ENCODE measurements at regions of chr9 and their contacts with region 1.

Region 1: DNA sequence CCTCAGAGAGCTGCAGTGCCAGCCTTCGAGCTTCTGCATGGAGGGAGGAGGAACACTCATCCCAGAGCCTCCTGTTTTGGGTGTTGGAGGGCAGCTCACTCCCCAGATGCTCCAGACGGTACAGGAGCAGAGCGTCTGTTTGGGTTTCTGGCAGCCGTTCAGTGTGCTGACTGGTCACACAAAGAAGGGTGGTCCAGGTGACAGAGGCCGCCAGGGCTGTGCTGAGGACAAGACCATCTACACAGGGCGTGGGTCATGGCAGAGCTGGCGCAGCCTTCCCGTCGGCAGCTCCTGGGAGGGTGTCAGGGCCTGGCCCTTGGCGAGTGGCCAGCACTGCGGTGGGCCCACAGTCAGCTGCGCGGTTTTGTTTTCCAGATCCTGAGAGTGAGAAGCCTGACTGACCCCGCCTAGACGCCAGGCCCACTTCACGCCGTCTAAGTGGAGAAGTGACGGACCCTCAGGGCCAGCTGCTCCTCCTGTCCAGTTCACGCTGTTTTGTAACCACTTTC is 131.4 kb upstream of the FAM120A start:
- DNase-seq: no peak
- H3K4me3 ChIP-seq: no peak overlapping the region
- H3K27ac ChIP-seq: no peak overlapping the region
- H3K4me1 ChIP-seq: no peaks in the 10 kb centered on the region
- H3K27me3 ChIP-seq: no peaks in the 10 kb centered on the region
- CTCF ChIP-seq: no peak
- EP300 ChIP-seq: no peak
- POLR2A ChIP-seq: no peak

Region 2: DNA sequence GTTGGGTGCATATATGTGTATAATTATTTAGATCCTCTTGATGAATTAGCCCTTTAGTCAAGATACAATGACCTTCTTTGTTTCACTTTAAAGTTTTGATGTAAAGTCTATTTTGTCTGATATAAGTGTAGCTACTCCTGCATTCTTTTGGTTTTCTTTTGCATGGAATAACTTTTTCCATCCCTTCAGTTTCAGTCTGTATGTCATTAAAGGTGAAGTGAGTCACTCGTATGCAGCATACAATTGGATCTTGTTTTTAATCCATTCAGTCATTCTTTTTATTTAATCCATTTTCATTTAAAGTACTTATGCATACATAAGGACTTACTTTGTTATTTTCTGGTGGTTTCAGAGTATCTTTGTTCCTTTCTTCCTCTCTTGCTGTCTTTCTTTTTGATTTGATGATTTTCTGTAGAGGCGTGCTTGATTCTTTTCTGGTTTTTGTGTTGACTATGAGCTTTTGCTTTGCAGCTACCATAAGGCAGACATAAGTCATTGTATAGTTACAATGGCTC is 95.2 kb after region 1 on chr9:
- intact Hi-C with region 1: no loop called
- DNase-seq: no peak
- H3K4me3 ChIP-seq: no peak overlapping the region
- H3K27ac ChIP-seq: no peak overlapping the region
- H3K4me1 ChIP-seq: no peaks in the 10 kb centered on the region
- H3K27me3 ChIP-seq: no peaks in the 10 kb centered on the region
- CTCF ChIP-seq: no peak
- EP300 ChIP-seq: no peak
- POLR2A ChIP-seq: no peak

Region 3: DNA sequence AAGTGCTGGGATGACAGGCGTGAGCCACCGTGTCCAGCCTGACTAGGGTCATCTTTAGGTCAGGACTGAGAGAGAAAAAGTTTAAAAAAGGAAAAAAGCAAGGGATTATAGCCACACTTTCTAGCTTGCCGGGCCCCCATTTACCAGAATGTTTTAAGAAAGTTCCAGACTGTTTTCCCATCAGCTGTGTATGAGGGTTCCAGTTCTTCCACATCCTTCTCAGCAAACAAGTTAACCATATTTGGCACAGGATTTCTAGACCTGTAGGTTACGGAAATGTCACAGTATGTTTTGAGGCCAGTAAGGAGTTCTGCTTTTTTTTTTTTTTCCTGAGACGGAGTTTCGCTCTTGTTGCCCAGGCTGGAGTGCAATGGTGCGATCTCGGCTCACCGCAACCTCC is 124.3 kb after region 1 on chr9:
- intact Hi-C with region 1: loop called (anchors 10 kb)
- DNase-seq: no peak
- H3K4me3 ChIP-seq: no peak overlapping the region
- H3K27ac ChIP-seq: no peak overlapping the region
- H3K4me1 ChIP-seq: peaks cover 0 to 3% (median 0%) of the 10 kb centered on the region in 4 donors
- H3K27me3 ChIP-seq: no peaks in the 10 kb centered on the region
- CTCF ChIP-seq: no peak
- EP300 ChIP-seq: no peak
- POLR2A ChIP-seq: no peak

Region 4: DNA sequence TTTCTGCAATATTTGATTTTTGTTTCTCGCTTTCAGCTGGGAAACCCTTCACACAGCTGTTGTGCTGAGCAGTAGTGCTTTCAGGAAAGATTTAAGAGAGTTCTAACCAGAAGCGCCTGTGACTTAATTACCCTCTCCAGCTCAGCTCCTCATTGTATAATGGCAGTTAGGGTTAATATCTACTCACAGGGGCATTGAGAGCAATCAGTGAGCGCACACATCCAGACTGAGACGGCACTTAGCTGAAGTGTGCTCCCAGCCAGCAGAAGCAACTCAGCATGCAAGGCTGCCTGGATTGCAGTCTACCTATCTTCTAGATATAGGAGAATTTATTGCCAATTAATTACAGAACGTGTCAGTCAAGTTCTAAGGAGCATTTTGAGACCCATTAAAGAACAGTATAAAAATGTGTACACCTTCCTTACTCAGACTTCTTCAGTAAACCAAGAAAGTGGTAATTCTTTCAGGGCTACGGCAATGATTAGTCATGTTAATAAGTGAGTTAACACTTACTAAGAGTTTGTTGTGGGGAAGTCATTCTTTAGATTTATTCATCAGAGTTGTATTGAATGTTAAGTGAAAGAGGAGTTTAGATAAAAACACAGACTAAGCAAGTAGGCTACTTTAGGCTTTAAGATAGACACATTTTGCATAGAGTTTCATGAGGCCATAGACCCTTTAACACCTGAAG is 1123.1 kb after region 1 on chr9:
- intact Hi-C with region 1: no loop called
- DNase-seq: no peak
- H3K4me3 ChIP-seq: no peak overlapping the region
- H3K27ac ChIP-seq: no peak overlapping the region
- H3K4me1 ChIP-seq: peaks cover 0 to 9% (median 0%) of the 10 kb centered on the region in 4 donors
- H3K27me3 ChIP-seq: no peaks in the 10 kb centered on the region
- CTCF ChIP-seq: no peak
- EP300 ChIP-seq: no peak
- POLR2A ChIP-seq: no peak